Posterior cingulate gyrus (tissue), 11 donors: ENCODE measurements at regions of chr20 and their contacts with region 1.

Region 1: DNA sequence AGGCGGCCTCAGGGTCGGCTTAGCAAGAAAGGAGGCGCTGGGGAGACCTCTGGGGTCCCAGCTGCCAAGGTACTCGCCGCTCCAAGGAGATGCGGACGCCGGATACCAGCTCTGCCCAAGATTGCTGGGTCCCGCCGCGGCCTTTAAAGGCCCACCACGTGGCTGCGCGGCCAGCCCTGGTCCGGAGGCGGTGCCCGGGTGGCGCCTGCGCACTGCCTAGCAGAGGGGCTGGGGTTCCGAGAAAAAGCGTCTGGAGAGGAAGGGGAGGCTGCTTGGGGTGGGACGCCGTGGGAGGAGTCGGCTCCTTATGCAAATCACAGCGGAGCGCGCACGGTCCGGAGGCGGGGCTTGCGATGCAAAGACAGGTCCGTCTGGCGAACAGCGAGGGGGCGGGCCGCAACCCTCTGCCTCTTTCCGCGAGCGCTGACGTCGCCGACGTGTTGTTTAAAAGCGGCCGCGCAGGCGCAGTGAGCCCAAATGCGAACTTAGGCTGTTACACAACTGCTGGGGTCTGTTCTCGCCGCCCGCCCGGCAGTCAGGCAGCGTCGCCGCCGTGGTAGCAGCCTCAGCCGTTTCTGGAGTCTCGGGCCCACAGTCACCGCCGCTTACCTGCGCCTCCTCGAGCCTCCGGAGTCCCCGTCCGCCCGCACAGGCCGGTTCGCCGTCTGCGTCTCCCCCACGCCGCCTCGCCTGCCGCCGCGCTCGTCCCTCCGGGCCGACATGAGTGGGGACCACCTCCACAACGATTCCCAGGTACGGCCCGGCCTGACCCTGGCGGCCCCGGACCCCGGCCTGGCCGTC is at the start of gene TOP1:
- DNase-seq: peak; percentile 99 to 100 (median 100)

Region 2: GRCh38 chr20:40956542-40957264 is 71.8 kb before region 1 on chr20:
- intact Hi-C with region 1: no loop called
- DNase-seq: peak in 1 of 10 donors; percentile 67

Region 3: DNA sequence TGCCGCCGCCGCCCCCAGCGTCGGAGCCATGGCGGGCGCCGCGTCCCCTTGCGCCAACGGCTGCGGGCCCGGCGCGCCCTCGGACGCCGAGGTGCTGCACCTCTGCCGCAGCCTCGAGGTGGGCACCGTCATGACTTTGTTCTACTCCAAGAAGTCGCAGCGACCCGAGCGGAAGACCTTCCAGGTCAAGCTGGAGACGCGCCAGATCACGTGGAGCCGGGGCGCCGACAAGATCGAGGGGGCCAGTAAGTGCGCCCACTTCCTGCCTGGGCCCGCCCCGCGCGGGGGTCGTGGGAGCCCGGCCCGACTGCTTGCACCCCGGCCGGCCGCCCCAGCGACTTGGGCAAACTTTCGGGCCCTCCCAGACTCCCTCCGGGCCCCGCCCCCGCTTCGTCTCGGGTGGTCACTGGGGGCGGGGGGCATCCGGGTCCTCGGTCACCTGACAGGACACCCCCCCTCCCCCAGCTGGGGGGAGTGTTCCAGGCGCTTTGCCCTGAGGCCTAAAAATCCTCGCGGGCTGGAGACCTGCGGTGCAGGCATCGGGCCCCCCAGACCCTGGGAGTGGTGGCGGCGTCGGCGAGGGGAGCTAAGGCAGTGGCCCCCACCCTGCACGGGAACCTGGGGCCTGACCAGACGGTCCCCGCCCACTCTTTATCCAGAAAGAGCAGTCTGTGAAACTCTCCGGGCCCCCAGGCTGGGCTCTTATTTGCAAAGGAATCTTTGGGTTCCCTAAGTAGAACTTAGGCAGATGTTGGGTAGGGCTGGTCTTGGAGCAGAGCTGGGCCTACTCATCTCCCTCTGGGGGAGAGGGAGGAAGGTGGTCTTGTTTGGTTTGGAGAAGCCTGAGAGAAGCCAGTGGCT is 109.3 kb after region 1 on chr20:
- intact Hi-C with region 1: loop called (anchors 2 kb)
- DNase-seq: peak in 8 of 10 donors; percentile 38 to 88 (median 45)